AG04449 (cell line): ENCODE measurements at regions of chr1 and their contacts with region 1.

Region 1: DNA sequence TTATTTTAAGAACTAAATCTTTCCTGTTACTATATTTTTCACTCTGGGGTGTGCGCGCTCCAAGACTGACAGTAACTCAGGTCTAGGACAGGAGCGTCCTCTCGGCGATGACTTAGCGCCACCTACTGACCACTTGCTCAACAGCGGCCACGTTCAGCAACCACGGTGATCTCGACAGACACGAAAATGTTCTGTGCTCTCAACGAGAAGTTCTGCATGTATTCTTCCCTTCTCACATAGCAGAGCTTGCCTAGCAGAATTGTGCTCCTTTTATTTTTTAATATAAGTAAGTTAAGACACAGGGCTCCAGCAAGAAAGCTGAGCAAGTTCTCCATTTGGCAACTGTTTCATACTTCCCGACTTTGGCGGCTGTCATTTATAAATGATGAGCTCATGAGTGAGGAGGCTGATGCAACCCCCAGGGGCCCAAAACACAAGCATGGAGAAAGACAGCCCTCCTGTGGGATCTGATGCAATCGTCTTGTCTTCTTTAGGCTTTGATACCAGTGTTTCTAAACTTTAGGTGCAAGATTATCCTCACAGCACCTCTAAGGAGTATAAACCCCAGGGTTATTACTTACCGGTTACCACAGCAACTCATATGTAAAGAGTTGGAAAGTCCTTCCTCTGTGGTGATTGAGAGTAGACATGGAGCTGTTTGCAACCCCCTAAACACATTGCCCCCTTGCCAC is 92.6 kb downstream of the HHIPL2 start:
- DNase-seq: peak; percentile 78
- H3K4me3 ChIP-seq: peak overlapping the region; percentile 48
- CTCF ChIP-seq: peak; percentile 92

Region 2: DNA sequence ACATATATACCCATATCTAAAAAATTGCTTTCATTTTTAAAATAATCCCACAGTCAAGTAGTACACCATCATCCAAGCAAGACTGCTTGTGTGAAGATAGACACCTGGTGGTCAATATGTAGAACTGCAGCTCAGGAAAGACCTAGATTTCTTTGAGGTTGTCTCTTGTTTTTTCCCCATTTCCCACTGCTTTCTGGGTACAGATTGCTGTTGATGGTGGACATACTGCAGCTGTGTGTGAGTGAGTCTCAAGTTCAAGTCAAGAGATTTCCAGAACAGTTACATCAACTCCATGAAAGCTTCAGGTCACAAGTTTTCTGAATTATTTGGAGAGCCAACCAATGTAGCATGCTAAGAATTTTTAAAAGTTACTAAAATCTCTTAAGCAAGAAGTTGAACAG is 1019.8 kb before region 1 on chr1:
- CTCF ChIA-PET with region 1: interaction called, 21 read pairs
- POLR2A ChIA-PET with region 1: no interaction called
- DNase-seq: no peak
- H3K4me3 ChIP-seq: no peak overlapping the region
- CTCF ChIP-seq: peak; percentile 78

Region 3: DNA sequence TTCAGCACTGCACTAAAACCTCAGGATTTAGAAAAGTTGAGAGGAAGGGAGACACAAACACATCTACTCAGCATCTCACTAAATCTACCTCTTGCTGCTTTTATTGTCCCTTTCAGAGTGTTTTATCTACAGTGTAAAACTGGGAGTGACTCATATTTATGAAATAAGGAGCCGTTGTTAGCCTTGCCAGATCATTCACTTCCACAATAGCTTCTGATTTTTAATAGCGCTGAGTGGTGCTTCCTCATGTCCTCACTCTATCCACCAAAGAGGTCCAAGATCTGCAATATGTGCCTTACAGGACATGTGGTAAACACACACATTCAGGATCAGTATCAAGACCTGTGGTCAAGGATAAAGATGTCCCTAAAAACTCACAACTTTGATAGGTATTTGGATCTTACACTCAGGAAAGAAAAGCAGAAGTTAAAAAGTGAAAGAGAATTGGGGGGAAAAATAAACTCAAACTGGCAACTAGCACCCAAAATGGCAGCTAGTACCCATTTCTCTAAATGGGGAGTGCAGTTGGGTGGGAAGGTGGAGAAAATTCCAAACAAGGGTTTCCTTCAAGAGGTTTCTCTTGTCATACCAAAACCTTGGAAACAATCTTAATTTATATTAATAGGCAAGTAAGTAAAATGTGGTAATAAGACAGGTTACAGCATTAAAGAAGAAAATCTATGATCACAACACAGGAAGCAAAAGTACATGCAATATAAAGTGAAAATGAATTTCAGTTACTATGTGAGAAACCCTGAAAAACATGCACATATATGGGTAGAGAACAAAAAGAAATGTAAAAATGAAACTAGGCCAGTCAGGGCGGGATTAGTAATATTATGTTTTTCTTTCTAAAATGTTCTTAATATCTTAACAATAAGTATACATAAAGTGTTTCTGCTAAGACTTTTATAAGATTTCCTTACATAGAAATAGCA is 729.3 kb before region 1 on chr1:
- CTCF ChIA-PET with region 1: interaction called, 16 read pairs
- POLR2A ChIA-PET with region 1: no interaction called
- DNase-seq: no peak
- H3K4me3 ChIP-seq: no peak overlapping the region
- CTCF ChIP-seq: no peak

Region 4: DNA sequence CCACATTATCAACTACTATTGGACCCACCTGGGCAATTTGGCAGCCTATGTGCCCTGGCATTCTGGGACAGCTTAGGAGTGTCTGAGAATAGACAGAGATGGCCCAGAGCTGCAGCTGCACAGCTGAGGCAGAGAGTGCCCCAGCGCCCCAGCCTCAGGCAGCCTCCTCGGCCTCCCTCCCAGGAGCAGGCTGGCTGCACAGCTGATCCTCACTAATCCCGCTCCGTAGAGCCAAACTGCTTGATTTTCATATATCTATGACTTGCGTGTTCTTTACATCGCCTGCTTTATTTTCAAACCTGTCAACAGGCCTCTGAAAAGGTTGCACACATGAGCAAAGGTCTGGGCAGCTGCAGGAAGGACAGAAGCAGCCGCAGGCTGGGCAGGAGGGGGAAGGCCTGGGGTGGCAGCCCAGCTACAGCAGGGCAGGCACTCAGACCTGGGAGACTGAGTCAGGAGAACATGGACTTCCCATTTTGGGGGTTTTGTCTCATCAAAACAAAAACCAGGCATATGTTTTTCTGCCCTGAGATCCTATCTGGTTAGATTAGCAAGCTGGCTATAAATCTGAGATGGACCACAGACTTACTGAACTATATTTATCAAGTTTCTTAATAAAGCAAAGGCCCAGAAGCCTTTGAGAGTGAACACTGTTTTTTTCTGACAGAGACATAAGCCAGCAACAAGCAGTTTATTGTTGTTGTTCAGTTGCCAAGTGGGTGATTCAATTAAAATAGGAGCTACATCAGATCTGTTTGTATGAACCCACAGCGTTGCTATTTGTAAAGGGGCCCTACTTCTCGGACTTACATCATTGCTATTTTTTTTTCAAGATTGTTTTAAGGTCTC is 411.7 kb before region 1 on chr1:
- CTCF ChIA-PET with region 1: interaction called, 17 read pairs
- POLR2A ChIA-PET with region 1: interaction called, 3 read pairs
- DNase-seq: peak; percentile 97
- H3K4me3 ChIP-seq: no peak overlapping the region
- CTCF ChIP-seq: no peak

Region 5: DNA sequence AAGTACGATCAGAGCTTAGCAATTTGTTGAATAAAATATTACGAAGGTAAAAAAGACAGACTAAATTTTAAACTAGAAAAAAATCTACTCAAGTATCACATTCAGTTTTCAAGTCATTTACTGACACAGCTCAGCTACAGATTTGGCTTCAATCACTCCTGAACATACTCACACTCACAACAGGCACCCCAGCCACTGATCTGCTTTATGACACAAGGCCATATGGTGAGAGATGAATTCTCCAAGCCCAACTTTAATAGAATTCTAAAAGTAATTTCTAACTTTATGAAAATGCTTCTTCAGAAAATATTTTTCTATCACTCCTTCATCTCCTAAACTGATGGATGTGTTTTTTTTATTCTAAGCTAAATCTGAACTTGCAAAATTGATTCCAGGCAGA is 244.6 kb before region 1 on chr1:
- CTCF ChIA-PET with region 1: interaction called, 15 read pairs
- POLR2A ChIA-PET with region 1: no interaction called
- DNase-seq: no peak
- H3K4me3 ChIP-seq: no peak overlapping the region
- CTCF ChIP-seq: no peak

Region 6: DNA sequence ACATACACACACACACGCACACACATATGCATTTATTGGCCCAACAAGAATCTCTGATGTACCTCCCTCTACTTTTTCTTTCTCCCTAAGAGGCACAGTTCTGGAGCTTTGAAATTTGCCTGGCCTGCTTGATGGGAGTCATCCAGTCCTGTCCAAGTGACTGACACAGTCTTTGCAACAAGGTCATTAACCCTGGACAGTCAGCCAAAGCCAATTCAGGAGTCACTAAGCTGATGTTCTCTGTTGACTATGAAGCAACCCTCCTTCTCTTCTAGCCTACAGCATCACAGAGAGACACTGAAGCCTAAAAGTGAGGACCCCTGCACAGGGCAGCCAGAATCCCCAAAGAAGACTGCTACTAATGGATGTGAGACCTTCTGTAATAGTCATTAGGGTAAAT is 30.5 kb before region 1 on chr1:
- CTCF ChIA-PET with region 1: no interaction called
- POLR2A ChIA-PET with region 1: no interaction called
- DNase-seq: no peak
- H3K4me3 ChIP-seq: no peak overlapping the region
- CTCF ChIP-seq: no peak

Region 7: GRCh38 chr1:222465211-222466041 is 10.1 kb after region 1 on chr1:
- CTCF ChIA-PET with region 1: interaction called, 37 read pairs
- POLR2A ChIA-PET with region 1: no interaction called
- DNase-seq: peak; percentile 63
- H3K4me3 ChIP-seq: peak overlapping the region; percentile 59
- CTCF ChIP-seq: peak; percentile 94

Region 8: GRCh38 chr1:222606757-222607156 is 151.4 kb after region 1 on chr1:
- CTCF ChIA-PET with region 1: no interaction called
- POLR2A ChIA-PET with region 1: no interaction called
- DNase-seq: no peak
- H3K4me3 ChIP-seq: no peak overlapping the region
- CTCF ChIP-seq: no peak